ENCODE measurements at regions of chr15 and their contacts with region 1.

Region 1: GRCh38 chr15:64731012-64731806 is 44.2 kb downstream of the RBPMS2 start:
- DNase-seq: peak; percentile 67 to 93 (median 84)
- ATAC-seq: peak; percentile 93
- H3K4me3 ChIP-seq: no peak overlapping the region
- H3K27ac ChIP-seq: no peak overlapping the region
- H3K4me1 ChIP-seq: no peaks in the 10 kb centered on the region
- H3K27me3 ChIP-seq: no peaks in the 10 kb centered on the region
- CTCF ChIP-seq: peak; percentile 88 to 96

Region 2: GRCh38 chr15:64686216-64686631 is 45.0 kb before region 1 on chr15:
- intact Hi-C with region 1: loop called in 1 of 2 experiments (anchors 2 kb)
- DNase-seq: peak in 2 of 4 donors; percentile 53 to 69
- ATAC-seq: peak; percentile 47
- H3K4me3 ChIP-seq: no peak overlapping the region
- H3K27ac ChIP-seq: no peak overlapping the region
- H3K4me1 ChIP-seq: peaks cover 0 to 9% of the 10 kb centered on the region in 2 donors
- H3K27me3 ChIP-seq: no peaks in the 10 kb centered on the region
- CTCF ChIP-seq: peak; percentile 66 to 68

Region 3: GRCh38 chr15:64809649-64810496 is 78.7 kb after region 1 on chr15:
- intact Hi-C with region 1: loop called in 1 of 2 experiments (anchors 2 kb)
- DNase-seq: peak; percentile 61 to 92 (median 80)
- ATAC-seq: peak; percentile 95
- H3K4me3 ChIP-seq: no peak overlapping the region
- H3K27ac ChIP-seq: no peak overlapping the region
- H3K4me1 ChIP-seq: no peaks in the 10 kb centered on the region
- H3K27me3 ChIP-seq: peaks cover 0 to 9% of the 10 kb centered on the region in 2 donors
- CTCF ChIP-seq: peak; percentile 82 to 92

Region 4: DNA sequence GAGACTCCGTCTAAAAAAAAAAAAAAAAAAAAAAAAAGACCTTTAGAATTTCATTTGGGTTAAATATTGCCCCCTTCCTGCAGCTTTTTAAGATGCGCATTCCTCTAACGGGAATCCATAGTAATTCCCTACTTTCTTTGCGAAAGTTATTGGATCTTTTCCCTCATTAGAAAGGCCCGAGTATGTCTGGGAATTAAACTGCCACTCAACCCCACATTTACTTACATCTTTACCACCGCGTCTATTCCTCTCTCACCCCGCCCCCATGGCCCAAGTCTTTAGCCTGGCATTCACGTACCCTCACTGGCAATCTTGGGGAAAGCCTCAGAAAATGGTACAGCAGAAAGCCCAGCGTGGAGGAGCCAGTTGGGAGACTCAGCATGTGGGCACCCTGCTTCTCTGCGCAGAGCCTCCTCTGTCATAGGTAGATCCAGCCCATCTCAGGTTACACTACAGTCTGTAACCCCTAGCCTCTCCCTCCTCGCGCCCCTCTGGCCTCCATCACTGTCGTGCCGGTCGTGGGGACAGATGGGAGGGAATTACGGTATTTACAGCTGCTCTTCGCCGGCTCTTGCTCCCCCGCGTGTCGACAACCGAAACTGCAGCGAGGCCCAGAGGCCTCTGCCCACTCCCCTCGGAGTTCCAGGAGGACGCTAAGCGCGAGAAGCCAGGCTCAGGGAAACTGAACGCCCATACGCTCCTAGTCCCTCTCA is 174.1 kb after region 1 on chr15:
- intact Hi-C with region 1: loop called in 1 of 2 experiments (anchors 10 kb)
- DNase-seq: peak in 3 of 4 donors; percentile 80 to 94 (median 86)
- ATAC-seq: peak; percentile 96
- H3K4me3 ChIP-seq: peak overlapping the region; percentile 7 to 27
- H3K27ac ChIP-seq: peak overlapping the region in 1 of 2 donors; percentile 28
- H3K4me1 ChIP-seq: peaks cover 0 to 45% of the 10 kb centered on the region in 2 donors
- H3K27me3 ChIP-seq: peaks cover 0 to 8% of the 10 kb centered on the region in 2 donors
- CTCF ChIP-seq: peak; percentile 94 to 95

Measured in left lung (tissue), 14 donors.